ENCODE measurements at regions of chr7 and their contacts with region 1.

Region 1: GRCh38 chr7:64504581-64505120 is 58.2 kb downstream of the ZNF680 start:
- DNase-seq: no peak
- H3K4me3 Mint-ChIP-seq: no peak overlapping the region
- H3K27ac Mint-ChIP-seq: no peak overlapping the region
- H3K4me1 Mint-ChIP-seq: no peaks in the 10 kb centered on the region
- H3K27me3 Mint-ChIP-seq: no peaks in the 10 kb centered on the region
- CTCF ChIP-seq: no peak

Region 2: GRCh38 chr7:64521409-64521984 is 16.8 kb after region 1 on chr7:
- CTCF ChIA-PET with region 1: interaction called, 11 read pairs
- intact Hi-C with region 1: loop called (anchors 1 kb)
- DNase-seq: no peak
- H3K4me3 Mint-ChIP-seq: no peak overlapping the region
- H3K27ac Mint-ChIP-seq: no peak overlapping the region
- H3K4me1 Mint-ChIP-seq: no peaks in the 10 kb centered on the region
- H3K27me3 Mint-ChIP-seq: no peaks in the 10 kb centered on the region
- CTCF ChIP-seq: no peak

Region 3: GRCh38 chr7:64528770-64529169 is 24.1 kb after region 1 on chr7:
- CTCF ChIA-PET with region 1: interaction called, 11 read pairs
- intact Hi-C with region 1: no loop called
- DNase-seq: no peak
- H3K4me3 Mint-ChIP-seq: no peak overlapping the region
- H3K27ac Mint-ChIP-seq: no peak overlapping the region
- H3K4me1 Mint-ChIP-seq: no peaks in the 10 kb centered on the region
- H3K27me3 Mint-ChIP-seq: no peaks in the 10 kb centered on the region
- CTCF ChIP-seq: no peak

Region 4: GRCh38 chr7:64599355-64599754 is 94.7 kb after region 1 on chr7:
- CTCF ChIA-PET with region 1: no interaction called
- intact Hi-C with region 1: no loop called
- DNase-seq: no peak
- H3K4me3 Mint-ChIP-seq: no peak overlapping the region
- H3K27ac Mint-ChIP-seq: no peak overlapping the region
- H3K4me1 Mint-ChIP-seq: no peaks in the 10 kb centered on the region
- H3K27me3 Mint-ChIP-seq: no peaks in the 10 kb centered on the region
- CTCF ChIP-seq: no peak

Region 5: DNA sequence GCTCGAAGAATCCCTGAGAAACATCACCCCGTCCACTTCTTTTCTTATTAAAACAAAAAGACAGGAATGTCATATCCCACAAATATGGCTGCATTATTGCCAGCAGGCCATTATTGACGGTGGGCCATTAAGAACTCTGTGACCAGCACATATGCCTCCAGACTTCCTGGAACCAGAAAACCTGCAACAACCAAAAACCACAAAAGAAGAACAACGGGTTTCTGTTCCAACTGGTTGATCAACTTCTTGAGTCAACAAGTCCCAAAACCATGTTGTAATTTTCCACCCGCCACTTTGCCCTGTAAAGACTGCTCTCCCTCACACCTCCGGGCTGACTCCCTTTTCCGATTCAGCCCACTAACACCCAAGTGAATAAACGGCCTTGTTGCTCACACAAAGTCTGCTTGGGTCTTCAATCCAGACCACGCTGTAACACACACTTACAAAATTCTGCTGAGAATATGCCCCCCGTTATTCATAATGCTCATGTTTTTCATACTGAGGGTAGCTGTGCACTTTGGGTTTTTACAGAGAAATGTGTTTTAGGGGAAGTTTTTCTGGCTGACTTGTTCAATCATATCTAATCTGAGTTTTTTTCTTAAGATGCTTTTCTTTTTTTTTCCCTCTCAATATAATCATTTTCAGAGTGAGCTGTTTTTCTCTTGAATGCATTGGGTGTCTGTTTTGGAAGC is 182.0 kb after region 1 on chr7:
- CTCF ChIA-PET with region 1: no interaction called
- intact Hi-C with region 1: no loop called
- DNase-seq: no peak
- H3K4me3 Mint-ChIP-seq: no peak overlapping the region
- H3K27ac Mint-ChIP-seq: no peak overlapping the region
- H3K4me1 Mint-ChIP-seq: peaks cover 7% of the 10 kb centered on the region
- H3K27me3 Mint-ChIP-seq: no peaks in the 10 kb centered on the region
- CTCF ChIP-seq: no peak